Common myeloid progenitor, CD34-positive (primary cell): ENCODE measurements at regions of chr1 and their contacts with region 1.

Region 1: GRCh38 chr1:6438047-6438525 is 13.5 kb downstream of the ESPN start:
- DNase-seq: peak; percentile 66 to 75 (median 68)
- H3K4me3 ChIP-seq: no peak overlapping the region
- H3K27ac ChIP-seq: no peak overlapping the region
- H3K4me1 ChIP-seq: peaks cover 0 to 10% (median 3%) of the 10 kb centered on the region in 4 experiments
- H3K27me3 ChIP-seq: peaks cover 0 to 33% (median 15%) of the 10 kb centered on the region in 5 experiments

Region 2: GRCh38 chr1:6423321-6423999 is 14.6 kb before region 1 on chr1:
- CTCF ChIA-PET with region 1: interaction called, 61 read pairs
- POLR2A ChIA-PET with region 1: interaction called, 3 read pairs
- DNase-seq: peak; percentile 40 to 59 (median 58)
- H3K4me3 ChIP-seq: peak overlapping the region in 2 of 7 experiments; percentile 42 to 53
- H3K27ac ChIP-seq: no peak overlapping the region
- H3K4me1 ChIP-seq: peaks cover 0 to 38% (median 29%) of the 10 kb centered on the region in 4 experiments
- H3K27me3 ChIP-seq: peaks cover 0 to 97% (median 33%) of the 10 kb centered on the region in 5 experiments

Region 3: DNA sequence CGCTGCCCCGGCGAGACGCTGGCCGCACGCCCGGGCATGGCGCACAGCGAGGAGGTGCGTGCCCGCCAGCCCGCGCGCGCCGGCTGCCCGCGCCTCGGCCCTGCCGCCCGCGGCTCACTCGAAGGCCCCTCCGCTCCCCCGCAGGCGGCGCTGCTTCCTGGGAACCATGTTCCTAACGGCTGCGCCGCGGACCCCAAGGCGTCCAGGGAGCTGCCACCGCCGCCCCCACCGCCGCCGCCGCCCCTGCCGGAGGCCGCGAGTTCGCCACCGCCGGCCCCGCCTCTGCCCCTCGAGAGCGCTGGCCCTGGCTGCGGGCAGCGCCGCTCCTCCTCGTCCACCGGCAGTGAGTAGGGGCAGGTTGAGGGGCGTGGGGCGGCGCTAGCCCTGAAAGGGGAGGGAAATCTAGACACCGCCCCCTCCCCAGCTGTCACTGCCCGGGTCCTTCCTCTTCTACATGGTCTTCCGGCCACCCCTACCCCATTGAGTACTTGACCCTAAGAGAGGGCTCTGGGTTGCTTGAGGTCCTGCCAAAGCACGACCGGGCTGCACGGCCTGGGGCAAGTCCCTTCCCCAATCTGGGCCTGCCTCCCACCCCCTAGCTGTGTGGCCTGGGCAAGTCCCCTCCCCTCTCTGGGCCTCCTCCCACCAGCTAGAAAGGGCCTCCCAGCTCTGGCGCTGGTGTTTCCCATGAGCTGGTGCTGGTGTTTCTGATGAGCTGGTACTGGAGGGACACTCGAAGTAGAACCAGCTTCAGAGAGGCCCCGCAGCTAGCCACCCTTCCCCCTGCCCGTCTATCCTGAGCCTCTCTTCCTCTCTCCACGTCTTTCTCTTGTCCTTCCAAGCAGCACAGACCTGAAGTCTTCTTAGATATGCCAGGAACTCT is 10.9 kb after region 1 on chr1:
- CTCF ChIA-PET with region 1: interaction called, 31 read pairs
- POLR2A ChIA-PET with region 1: no interaction called
- DNase-seq: peak in 1 of 3 donors; percentile 27
- H3K4me3 ChIP-seq: no peak overlapping the region
- H3K27ac ChIP-seq: no peak overlapping the region
- H3K4me1 ChIP-seq: peaks cover 0 to 30% (median 9%) of the 10 kb centered on the region in 4 experiments
- H3K27me3 ChIP-seq: peaks cover 0 to 91% (median 27%) of the 10 kb centered on the region in 5 experiments